Uterus (tissue), 4 donors: ENCODE measurements at regions of chr6 and their contacts with region 1.

Region 1: GRCh38 chr6:40822619-40823018 is 216.4 kb downstream of the UNC5CL start:
- DNase-seq: no peak
- H3K4me3 ChIP-seq: no peak overlapping the region
- H3K27ac ChIP-seq: no peak overlapping the region
- H3K4me1 ChIP-seq: no peaks in the 10 kb centered on the region
- H3K27me3 ChIP-seq: no peaks in the 10 kb centered on the region
- CTCF ChIP-seq: no peak
- POLR2A ChIP-seq: no peak

Region 2: DNA sequence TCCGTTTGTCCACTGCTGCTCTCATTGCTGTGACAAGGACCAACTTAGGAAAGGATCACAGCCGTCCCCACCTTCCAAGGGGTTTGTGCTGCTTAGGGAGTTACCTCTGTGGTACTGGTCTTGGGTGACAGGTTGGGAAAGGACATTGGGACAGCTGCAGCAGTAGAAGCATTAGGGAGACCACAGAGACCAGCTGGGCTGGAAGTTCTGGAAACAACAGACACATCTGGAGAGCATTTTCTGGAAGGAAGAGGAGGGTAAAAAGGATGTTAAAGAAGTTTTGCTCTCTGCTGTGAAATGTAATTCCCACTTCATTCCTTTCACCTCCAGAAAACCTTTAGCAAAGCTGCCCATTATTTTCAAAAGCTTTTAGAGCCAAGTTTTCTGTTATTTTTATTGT is 539.6 kb before region 1 on chr6:
- intact Hi-C with region 1: loop called (anchors 5 kb)
- DNase-seq: no peak
- H3K4me3 ChIP-seq: no peak overlapping the region
- H3K27ac ChIP-seq: no peak overlapping the region
- H3K4me1 ChIP-seq: no peaks in the 10 kb centered on the region
- H3K27me3 ChIP-seq: no peaks in the 10 kb centered on the region
- CTCF ChIP-seq: no peak
- POLR2A ChIP-seq: no peak

Region 3: GRCh38 chr6:40852779-40853373 is 30.3 kb after region 1 on chr6:
- intact Hi-C with region 1: no loop called
- DNase-seq: no peak
- H3K4me3 ChIP-seq: no peak overlapping the region
- H3K27ac ChIP-seq: no peak overlapping the region
- H3K4me1 ChIP-seq: no peaks in the 10 kb centered on the region
- H3K27me3 ChIP-seq: no peaks in the 10 kb centered on the region
- CTCF ChIP-seq: no peak
- POLR2A ChIP-seq: no peak